ENCODE measurements at regions of chr1 and their contacts with region 1.

Region 1: GRCh38 chr1:153572569-153573015 is 6.9 kb upstream of the S100A2 start:
- DNase-seq: no peak
- H3K4me3 ChIP-seq: no peak overlapping the region
- H3K27ac ChIP-seq: peak overlapping the region; percentile 45 to 63 (median 62)
- H3K4me1 ChIP-seq: peaks cover 21 to 29% (median 25%) of the 10 kb centered on the region in 4 donors
- H3K27me3 ChIP-seq: no peaks in the 10 kb centered on the region
- CTCF ChIP-seq: peak; percentile 76 to 88 (median 87)
- EP300 ChIP-seq: no peak
- POLR2A ChIP-seq: no peak

Region 2: GRCh38 chr1:153510984-153511410 is 61.6 kb before region 1 on chr1:
- intact Hi-C with region 1: loop called (anchors 2 kb)
- DNase-seq: no peak
- H3K4me3 ChIP-seq: no peak overlapping the region
- H3K27ac ChIP-seq: peak overlapping the region in 2 of 4 donors; percentile 37 to 39
- H3K4me1 ChIP-seq: peaks cover 22 to 39% (median 35%) of the 10 kb centered on the region in 4 donors
- H3K27me3 ChIP-seq: no peaks in the 10 kb centered on the region
- CTCF ChIP-seq: peak; percentile 81 to 93 (median 90)
- EP300 ChIP-seq: no peak
- POLR2A ChIP-seq: no peak

Region 3: GRCh38 chr1:153532769-153533599 is 39.6 kb before region 1 on chr1:
- intact Hi-C with region 1: loop called (anchors 1 kb)
- DNase-seq: peak; percentile 96
- H3K4me3 ChIP-seq: peak overlapping the region; percentile 70 to 91 (median 85)
- H3K27ac ChIP-seq: peak overlapping the region; percentile 96 to 99 (median 97)
- H3K4me1 ChIP-seq: peaks cover 34 to 49% (median 47%) of the 10 kb centered on the region in 4 donors
- H3K27me3 ChIP-seq: no peaks in the 10 kb centered on the region
- CTCF ChIP-seq: peak; percentile 93 to 97 (median 95)
- EP300 ChIP-seq: no peak
- POLR2A ChIP-seq: no peak

Region 4: GRCh38 chr1:153598309-153599172 is 25.9 kb after region 1 on chr1:
- intact Hi-C with region 1: no loop called
- DNase-seq: no peak
- H3K4me3 ChIP-seq: no peak overlapping the region
- H3K27ac ChIP-seq: no peak overlapping the region
- H3K4me1 ChIP-seq: peaks cover 0 to 7% (median 3%) of the 10 kb centered on the region in 4 donors
- H3K27me3 ChIP-seq: no peaks in the 10 kb centered on the region
- CTCF ChIP-seq: no peak
- EP300 ChIP-seq: no peak
- POLR2A ChIP-seq: no peak

Region 5: DNA sequence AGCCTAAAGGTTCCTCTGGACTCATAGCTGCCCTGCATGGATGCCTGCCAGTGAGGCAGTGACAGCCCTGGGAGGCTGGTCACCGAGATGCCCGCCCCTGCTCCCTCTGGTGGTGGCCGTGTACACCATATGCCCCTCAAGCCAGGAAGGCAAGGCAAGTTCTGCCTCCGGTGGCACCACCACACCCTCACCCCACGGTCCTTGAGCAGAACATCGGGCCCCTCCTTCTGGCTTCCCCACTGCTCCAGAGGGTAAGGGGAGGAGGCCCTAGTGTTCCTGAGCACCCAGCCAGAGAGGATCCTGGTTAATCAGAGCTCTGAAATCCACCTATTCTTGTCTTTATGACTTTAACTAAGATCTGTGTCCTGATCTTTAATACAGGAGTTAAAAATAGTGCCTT is 45.1 kb after region 1 on chr1:
- intact Hi-C with region 1: loop called (anchors 5 kb)
- DNase-seq: no peak
- H3K4me3 ChIP-seq: no peak overlapping the region
- H3K27ac ChIP-seq: peak overlapping the region in 2 of 4 donors; percentile 9 to 46
- H3K4me1 ChIP-seq: peaks cover 20 to 31% (median 28%) of the 10 kb centered on the region in 4 donors
- H3K27me3 ChIP-seq: no peaks in the 10 kb centered on the region
- CTCF ChIP-seq: peak; percentile 33 to 54 (median 52)
- EP300 ChIP-seq: no peak
- POLR2A ChIP-seq: no peak

Region 6: GRCh38 chr1:153658400-153659174 is 86.0 kb after region 1 on chr1 and contains the start of gene SNAPIN:
- intact Hi-C with region 1: loop called (anchors 10 kb)
- DNase-seq: peak; percentile 98
- H3K4me3 ChIP-seq: peak within 1 kb of the TSS; percentile 66 to 81 (median 70)
- H3K27ac ChIP-seq: peak within 1 kb of the TSS; percentile 87 to 97 (median 92)
- H3K4me1 ChIP-seq: peaks cover 10 to 19% (median 13%) of the 10 kb centered on the region in 4 donors
- H3K27me3 ChIP-seq: no peaks in the 10 kb centered on the region
- CTCF ChIP-seq: peak; percentile 5 to 39 (median 8)
- EP300 ChIP-seq: no peak
- POLR2A ChIP-seq: no peak
- total RNA-seq, gene SNAPIN: 47.8 to 71.9 (median 63.3) TPM

Region 7: GRCh38 chr1:153749408-153750005 is 176.9 kb after region 1 on chr1:
- intact Hi-C with region 1: loop called (anchors 5 kb)
- DNase-seq: peak; percentile 95
- H3K4me3 ChIP-seq: no peak overlapping the region
- H3K27ac ChIP-seq: peak overlapping the region; percentile 46 to 69 (median 64)
- H3K4me1 ChIP-seq: peaks cover 53 to 73% (median 55%) of the 10 kb centered on the region in 4 donors
- H3K27me3 ChIP-seq: no peaks in the 10 kb centered on the region
- CTCF ChIP-seq: peak; percentile 93 to 98 (median 96)
- EP300 ChIP-seq: no peak
- POLR2A ChIP-seq: no peak